Sciatic nerve (tissue), 2 donors: ENCODE measurements at regions of chr22 and their contacts with region 1.

Region 1: DNA sequence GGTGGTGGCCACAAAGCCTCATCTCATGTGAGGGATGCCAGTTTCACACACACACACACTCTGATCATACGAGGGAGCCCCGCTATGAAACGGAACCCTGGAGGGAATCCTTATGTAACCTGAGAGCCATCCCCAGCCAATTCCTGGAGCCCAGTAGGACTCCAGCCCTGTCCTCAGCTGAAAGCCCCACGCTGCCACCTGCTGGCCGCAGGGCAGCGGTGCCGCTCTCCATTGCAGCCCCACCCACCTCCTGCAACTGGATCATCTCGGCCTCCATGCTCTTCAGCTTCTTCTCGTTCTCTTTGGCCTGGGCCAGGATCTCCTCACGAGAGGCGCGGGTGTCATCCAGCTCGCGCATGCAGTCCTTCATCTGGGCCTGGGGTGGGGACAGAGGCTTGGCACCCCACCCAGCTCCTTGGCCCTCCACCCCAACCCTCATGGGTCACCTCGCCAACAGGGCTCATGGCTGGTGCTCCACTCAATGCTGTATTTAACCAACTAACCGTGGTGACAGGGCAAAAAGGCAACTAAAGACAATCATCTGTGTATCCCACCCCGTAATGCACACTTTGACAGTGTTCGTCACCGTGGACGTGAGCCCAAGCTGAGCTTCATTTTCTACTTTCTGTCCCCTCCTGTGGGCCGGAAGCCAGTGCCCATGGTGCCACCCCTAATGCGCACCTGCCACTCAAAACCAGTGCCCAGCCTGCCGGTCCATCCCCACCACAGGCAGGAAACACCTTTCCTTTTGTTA is 33.7 kb downstream of the APOL1 start:
- DNase-seq: peak; percentile 87
- ATAC-seq: peak; percentile 86

Region 2: GRCh38 chr22:36194971-36195370 is 91.7 kb before region 1 on chr22:
- intact Hi-C with region 1: loop called (anchors 5 kb)
- DNase-seq: peak; percentile 77
- ATAC-seq: peak; percentile 60